ENCODE measurements at regions of chr15 and their contacts with region 1.

Region 1: DNA sequence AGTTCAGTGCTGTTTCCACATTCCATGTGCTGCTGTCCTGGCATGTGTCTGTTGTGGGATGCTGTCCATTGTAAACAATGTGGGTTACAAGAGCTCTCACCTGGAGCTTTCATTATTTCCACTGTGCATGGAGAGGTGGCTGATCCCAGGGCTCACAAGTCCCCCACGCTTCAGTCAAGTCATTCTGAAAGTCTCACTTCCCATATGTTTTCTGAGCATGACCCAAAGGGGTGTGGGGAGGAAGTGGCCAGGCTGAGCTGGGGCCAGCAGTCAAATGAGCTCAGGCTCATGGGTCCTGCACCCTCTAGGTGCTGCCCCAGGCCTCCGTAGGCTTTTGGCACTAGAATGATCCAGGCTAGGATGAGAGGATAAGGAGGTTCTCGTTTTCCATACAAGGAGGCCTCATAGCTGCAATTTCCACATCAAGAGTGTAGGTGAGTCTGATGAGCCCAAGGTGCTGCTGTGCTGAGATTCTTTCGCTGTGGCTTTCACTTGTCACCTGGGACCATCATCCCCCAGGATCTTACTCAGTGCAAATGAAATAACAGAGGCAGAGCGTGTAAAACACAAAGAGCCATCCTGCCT is 22.0 kb downstream of the STARD5 start:
- DNase-seq: peak; percentile 74
- H3K4me3 Mint-ChIP-seq: peak overlapping the region; percentile 99
- H3K27ac Mint-ChIP-seq: peak overlapping the region; percentile 99
- H3K4me1 Mint-ChIP-seq: peaks cover 77% of the 10 kb centered on the region
- H3K27me3 Mint-ChIP-seq: no peaks in the 10 kb centered on the region

Region 2: DNA sequence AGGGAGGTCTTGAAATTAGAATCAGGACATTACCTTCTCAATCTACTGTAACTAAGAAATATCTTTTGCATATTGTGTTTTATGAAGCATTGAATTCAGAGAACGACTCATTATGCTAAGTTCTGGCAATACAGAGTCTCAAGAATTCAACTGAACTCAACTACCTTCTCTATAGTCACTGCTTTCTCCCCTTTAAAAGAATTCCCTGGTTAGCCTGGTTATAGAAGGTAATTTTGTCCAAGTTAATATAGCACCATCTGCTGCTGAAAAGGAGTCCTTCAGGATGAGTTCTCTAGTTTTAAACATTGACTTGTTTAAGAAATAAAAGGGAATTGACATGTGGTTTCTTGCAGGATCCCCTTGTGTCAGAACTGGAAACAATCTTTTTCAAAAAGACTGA is 45.0 kb before region 1 on chr15:
- CTCF ChIA-PET with region 1: no interaction called
- POLR2A ChIA-PET with region 1: no interaction called
- intact Hi-C with region 1: no loop called
- DNase-seq: no peak
- H3K4me3 Mint-ChIP-seq: no peak overlapping the region
- H3K27ac Mint-ChIP-seq: no peak overlapping the region
- H3K4me1 Mint-ChIP-seq: no peaks in the 10 kb centered on the region
- H3K27me3 Mint-ChIP-seq: peaks cover 17% of the 10 kb centered on the region

Region 3: DNA sequence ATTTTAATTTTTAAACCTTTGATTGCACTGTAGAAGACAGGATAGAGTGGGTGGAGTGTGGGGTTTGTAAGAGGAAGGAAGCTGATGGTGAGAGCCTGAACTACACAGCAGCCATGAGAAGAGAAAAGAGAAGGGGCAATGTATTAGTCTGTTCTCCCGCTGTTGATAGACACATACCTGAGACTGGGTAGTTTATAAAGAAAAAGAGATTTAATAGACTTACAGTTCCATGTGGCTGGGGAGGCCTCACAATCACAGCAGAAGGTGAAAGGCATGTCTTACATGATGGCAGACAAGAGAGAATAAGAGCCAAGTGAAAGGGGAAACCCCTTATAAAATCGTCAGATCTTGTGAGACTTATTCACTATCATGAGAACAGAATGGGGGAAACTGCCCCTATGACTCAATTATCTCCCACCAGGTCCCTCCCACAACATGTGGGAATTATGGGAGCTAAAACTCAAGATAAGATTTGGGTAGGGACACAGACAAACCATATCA is 15.2 kb before region 1 on chr15:
- CTCF ChIA-PET with region 1: interaction called, 11 read pairs
- POLR2A ChIA-PET with region 1: interaction called, 24 read pairs
- intact Hi-C with region 1: loop called (anchors 2 kb)
- DNase-seq: no peak
- H3K4me3 Mint-ChIP-seq: peak overlapping the region; percentile 58
- H3K27ac Mint-ChIP-seq: peak overlapping the region; percentile 88
- H3K4me1 Mint-ChIP-seq: peaks cover 68% of the 10 kb centered on the region
- H3K27me3 Mint-ChIP-seq: no peaks in the 10 kb centered on the region

Region 4: GRCh38 chr15:81323944-81324881 is 22.3 kb after region 1 on chr15 and contains the start of gene STARD5:
- CTCF ChIA-PET with region 1: interaction called, 4 read pairs
- POLR2A ChIA-PET with region 1: interaction called, 9 read pairs
- intact Hi-C with region 1: loop called (anchors 1 kb)
- DNase-seq: peak; percentile 98
- H3K4me3 Mint-ChIP-seq: peak within 1 kb of the TSS; percentile 100
- H3K27ac Mint-ChIP-seq: peak within 1 kb of the TSS; percentile 76
- H3K4me1 Mint-ChIP-seq: peaks cover 24% of the 10 kb centered on the region
- H3K27me3 Mint-ChIP-seq: no peaks in the 10 kb centered on the region
- total RNA-seq, gene STARD5: 7.3 to 9.1 TPM

Region 5: GRCh38 chr15:81400640-81401236 is 98.8 kb after region 1 on chr15:
- CTCF ChIA-PET with region 1: interaction called, 10 read pairs
- POLR2A ChIA-PET with region 1: no interaction called
- intact Hi-C with region 1: no loop called
- DNase-seq: no peak
- H3K4me3 Mint-ChIP-seq: no peak overlapping the region
- H3K27ac Mint-ChIP-seq: no peak overlapping the region
- H3K4me1 Mint-ChIP-seq: no peaks in the 10 kb centered on the region
- H3K27me3 Mint-ChIP-seq: no peaks in the 10 kb centered on the region

Region 6: GRCh38 chr15:82262422-82263026 is 960.6 kb after region 1 on chr15 and contains the starts of genes EFL1 and SAXO2:
- CTCF ChIA-PET with region 1: no interaction called
- POLR2A ChIA-PET with region 1: interaction called, 3 read pairs
- intact Hi-C with region 1: loop called (anchors 10 kb)
- DNase-seq: peak; percentile 95
- H3K4me3 Mint-ChIP-seq: peak within 1 kb of the TSS; percentile 88
- H3K27ac Mint-ChIP-seq: peak within 1 kb of the TSS; percentile 83
- H3K4me1 Mint-ChIP-seq: peaks cover 27% of the 10 kb centered on the region
- H3K27me3 Mint-ChIP-seq: no peaks in the 10 kb centered on the region
- total RNA-seq, gene EFL1: 27.7 to 28.1 TPM
- total RNA-seq, gene SAXO2: 0.81 TPM in 1 of 2 experiments, not detected in the other

Measured in activated CD4-positive, alpha-beta memory T cell treated with anti-CD3 and anti-CD28 coated beads for 36 hours (primary cell).